GM10248 (cell line): ENCODE measurements at regions of chr1 and their contacts with region 1.

Region 1: DNA sequence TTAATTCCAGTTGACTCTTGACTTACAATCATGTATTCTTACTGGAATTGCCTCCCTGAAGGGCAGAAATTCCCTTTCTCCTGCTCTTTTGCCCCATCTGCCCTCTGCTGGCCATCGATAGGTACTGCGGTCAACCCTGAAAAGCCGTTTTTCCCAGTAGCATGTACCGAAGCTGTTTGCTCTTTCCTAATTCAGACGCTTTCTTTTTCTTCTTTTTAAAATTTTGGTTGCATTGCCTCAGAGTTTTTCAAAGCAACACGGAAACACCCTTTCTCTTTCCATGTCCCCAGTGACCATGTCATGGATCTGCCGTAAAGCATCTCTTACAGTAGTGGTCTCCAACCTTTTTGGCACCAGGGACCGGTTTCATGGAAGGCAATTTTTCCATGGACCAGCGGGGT is 164.2 kb upstream of the C1orf21 start:
- DNase-seq: peak; percentile 60
- CTCF ChIP-seq: peak; percentile 87

Region 2: GRCh38 chr1:184075055-184076029 is 147.3 kb before region 1 on chr1:
- CTCF ChIA-PET with region 1: interaction called, 17 read pairs
- POLR2A ChIA-PET with region 1: no interaction called
- DNase-seq: peak; percentile 29
- CTCF ChIP-seq: peak; percentile 55

Region 3: DNA sequence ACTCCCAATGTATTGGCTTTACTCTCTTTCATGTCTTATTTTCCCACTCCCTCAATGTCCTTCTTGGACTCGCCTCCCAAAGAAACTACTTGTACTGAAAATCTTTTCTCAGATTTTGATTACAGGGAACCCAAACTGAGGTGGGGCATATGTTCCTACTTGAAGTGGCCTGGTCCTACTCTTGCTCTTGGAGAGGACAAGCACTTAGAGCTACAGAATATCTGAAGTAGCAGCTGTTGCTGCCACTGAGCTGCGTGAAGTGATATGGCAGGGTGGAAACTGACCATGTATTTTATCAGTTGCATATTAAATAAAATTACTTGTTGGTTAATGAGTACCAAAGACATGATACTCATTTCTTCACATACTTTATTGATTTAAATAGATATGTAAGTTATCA is 41.6 kb before region 1 on chr1:
- CTCF ChIA-PET with region 1: no interaction called
- POLR2A ChIA-PET with region 1: no interaction called
- DNase-seq: no peak
- CTCF ChIP-seq: no peak